Lower leg skin (tissue), 4 donors: ENCODE measurements at regions of chr20 and their contacts with region 1.

Region 1: GRCh38 chr20:23315099-23315498 is 35.5 kb upstream of the NXT1 start:
- DNase-seq: peak in 1 of 2 donors; percentile 75
- H3K4me3 ChIP-seq: no peak overlapping the region
- CTCF ChIP-seq: no peak
- POLR2A ChIP-seq: no peak

Region 2: GRCh38 chr20:22346716-22347115 is 968.4 kb before region 1 on chr20:
- intact Hi-C with region 1: loop called (anchors 10 kb)
- DNase-seq: no peak
- H3K4me3 ChIP-seq: no peak overlapping the region
- CTCF ChIP-seq: no peak
- POLR2A ChIP-seq: no peak